Right cardiac atrium (tissue), 5 donors: ENCODE measurements at regions of chr7 and their contacts with region 1.

Region 1: DNA sequence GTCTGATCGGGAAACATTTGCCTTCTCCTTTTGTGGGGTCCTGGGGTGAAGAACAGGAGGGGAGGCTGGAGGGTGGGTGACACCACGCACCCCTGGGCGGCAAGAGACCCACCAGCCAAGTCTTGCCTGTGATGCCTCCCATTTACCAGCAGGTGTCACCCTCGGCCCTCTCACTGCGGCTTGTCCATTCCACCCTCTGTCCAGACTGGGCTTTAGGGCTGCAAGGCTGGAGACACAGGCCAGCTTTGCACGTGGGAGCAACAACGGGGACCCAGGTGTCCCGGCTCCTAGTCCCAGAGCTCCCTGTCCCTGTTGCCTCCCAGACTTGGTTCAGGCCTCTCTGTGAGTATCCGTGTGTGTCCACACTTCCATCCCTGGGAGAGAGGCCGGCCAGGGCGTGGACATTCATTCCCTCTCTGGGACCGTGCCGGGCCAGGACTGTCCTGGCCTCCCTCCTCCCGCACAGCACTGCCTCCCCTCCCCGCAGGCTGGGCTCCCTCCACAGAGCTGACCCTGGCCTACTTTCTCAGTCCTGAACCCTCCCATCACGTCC is 36.2 kb upstream of the GTF2IRD1 start:
- DNase-seq: peak; percentile 65 to 79 (median 78)
- ATAC-seq: peak; percentile 86 to 94
- H3K4me3 ChIP-seq: no peak overlapping the region
- H3K27ac ChIP-seq: no peak overlapping the region
- H3K4me1 ChIP-seq: no peaks in the 10 kb centered on the region
- H3K27me3 ChIP-seq: no peaks in the 10 kb centered on the region

Region 2: DNA sequence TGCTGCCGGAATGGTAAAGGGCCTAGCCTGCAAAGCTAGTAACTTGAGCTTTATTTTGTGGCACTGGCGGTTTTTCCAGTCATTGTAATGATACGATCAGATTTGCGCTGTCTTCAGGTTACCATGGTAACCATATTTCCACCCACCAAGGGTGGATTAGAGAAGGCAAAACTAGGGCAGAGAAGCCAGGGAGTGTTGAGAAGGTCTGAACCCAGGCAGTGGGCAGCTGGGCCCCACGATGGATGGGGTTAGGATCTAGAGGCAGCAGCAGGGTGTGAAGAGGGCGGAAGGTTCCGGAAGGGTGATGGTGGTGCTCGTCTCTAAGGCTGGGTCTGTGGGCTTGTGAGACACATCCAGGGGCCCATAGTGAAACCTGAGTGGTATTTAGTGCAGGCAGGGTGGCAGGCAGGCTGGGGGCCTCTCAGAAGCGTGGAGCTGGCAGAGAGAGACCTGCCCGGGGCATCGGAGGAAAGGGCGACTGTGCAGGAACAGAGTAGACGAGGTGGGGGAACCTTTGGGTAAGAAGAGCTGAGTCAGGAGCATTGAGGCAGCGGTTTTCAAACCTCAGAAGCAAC is 152.1 kb after region 1 on chr7:
- intact Hi-C with region 1: loop called in 2 of 4 experiments (anchors 1 to 5 kb)
- DNase-seq: no peak
- ATAC-seq: no peak
- H3K4me3 ChIP-seq: no peak overlapping the region
- H3K27ac ChIP-seq: no peak overlapping the region
- H3K4me1 ChIP-seq: no peaks in the 10 kb centered on the region
- H3K27me3 ChIP-seq: no peaks in the 10 kb centered on the region

Region 3: DNA sequence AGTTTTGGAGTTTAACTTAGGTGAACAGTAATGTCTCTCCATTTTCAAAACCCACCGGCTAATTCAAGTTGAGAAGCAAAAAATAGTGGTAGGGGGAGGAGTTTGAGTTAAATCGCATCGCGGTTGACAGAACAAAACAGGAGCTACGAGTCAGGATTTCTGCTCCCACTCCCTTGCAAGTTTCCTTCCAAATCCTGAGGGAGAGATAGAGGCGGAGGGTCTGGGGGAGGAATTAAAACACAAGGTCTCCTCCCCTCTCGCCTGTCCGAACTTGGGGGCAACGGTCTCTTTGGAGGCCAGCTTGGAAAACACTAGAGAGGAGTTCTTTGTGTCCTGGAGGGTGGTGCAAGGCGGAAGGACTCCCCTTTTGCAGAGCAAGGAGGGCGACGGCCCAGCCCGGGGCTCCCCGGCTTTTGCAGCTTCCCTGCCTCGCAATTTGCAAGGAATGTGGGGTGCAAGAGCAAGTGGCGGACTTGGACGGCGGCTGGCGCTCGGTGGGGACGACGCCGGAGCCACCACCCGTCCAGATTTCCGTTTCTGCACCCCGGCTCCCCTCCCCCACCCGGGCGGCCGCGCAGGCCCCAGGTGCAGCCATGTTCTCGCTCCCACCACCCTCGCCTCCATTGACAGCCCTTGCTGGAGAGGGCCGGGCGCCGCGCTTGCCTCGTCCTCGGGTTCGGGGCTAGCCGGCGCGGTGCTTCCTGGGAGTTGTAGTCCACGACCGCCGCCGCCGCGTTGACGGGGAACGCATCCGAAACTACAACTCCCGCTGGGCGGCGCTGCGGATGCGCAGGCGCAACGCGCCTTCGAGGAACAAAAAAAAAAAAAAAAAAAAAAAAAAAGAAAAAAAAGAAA is 239.6 kb after region 1 on chr7:
- intact Hi-C with region 1: loop called in 1 of 4 experiments (anchors 10 kb)
- DNase-seq: peak; percentile 99 to 100 (median 100)
- ATAC-seq: peak; percentile 95 to 96
- H3K4me3 ChIP-seq: peak overlapping the region; percentile 97
- H3K27ac ChIP-seq: peak overlapping the region; percentile 97
- H3K4me1 ChIP-seq: peaks cover 20% of the 10 kb centered on the region
- H3K27me3 ChIP-seq: no peaks in the 10 kb centered on the region

Region 4: DNA sequence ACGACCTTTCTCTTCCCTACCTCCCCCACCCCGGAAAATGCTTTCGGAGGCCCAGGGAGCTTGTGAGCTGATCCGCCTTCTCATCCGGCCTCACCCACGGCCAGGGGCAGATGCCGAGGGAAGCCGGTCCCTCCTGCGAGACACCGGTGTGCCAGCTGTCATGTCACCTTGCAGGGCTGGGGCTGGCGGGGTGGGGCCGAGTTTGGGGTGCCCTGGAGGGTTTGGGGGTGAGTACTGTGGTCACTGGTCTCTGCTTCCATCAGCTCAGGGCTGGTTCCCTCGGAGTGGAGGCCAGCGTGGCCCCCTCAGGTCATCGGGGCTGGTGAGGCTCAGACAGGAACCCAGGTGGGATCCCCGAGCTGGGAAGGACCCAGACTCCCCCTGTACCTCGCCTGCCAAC is 607.4 kb after region 1 on chr7:
- intact Hi-C with region 1: no loop called
- DNase-seq: no peak
- ATAC-seq: peak in 1 of 2 donors; percentile 11
- H3K4me3 ChIP-seq: no peak overlapping the region
- H3K27ac ChIP-seq: no peak overlapping the region
- H3K4me1 ChIP-seq: no peaks in the 10 kb centered on the region
- H3K27me3 ChIP-seq: no peaks in the 10 kb centered on the region

Region 5: DNA sequence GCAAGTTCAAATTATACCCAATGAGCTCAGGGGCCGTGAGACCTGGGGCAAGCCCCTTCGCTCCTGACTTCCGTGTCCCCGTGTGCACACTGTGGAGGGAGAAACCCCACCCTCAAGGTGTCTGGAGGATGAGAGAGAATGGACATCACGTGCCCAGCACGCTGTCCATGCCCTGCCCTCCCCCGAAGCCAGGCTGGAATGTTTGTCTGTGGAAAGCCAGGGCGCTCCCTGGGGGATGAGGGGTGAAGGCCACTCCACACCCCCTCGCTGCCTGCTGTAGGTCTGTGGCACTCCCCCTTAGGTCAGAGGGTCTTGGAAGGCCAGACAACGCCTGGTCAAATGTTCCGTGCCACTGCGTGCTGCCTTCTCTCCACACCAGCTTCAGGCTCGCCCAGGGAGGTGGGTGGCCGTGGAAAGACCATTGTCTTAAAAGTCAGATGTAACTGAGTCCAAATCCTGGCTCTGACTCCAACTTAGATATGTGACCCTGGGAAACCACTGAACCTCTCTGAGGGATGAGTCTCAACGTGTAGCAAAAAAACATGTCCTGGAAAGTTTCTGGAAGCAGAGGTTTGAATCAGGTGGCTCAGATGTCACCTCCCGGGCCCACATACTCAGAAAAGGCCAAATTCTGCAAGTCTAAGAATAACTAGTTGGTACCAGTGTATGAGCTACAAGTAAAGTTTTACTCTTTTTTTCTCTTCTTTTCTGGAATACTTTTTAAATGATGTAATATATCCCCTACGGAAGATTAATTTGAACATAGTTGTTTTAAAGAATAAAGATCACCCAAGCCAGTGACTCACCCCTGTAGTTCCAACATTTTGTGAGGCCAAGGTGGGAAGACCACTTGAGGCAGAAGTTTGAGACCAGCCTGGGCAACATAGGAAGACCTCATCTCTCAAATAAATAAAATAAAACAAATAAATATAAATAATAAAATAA is 631.2 kb after region 1 on chr7:
- intact Hi-C with region 1: loop called in 1 of 4 experiments (anchors 10 kb)
- DNase-seq: no peak
- ATAC-seq: no peak
- H3K4me3 ChIP-seq: no peak overlapping the region
- H3K27ac ChIP-seq: no peak overlapping the region
- H3K4me1 ChIP-seq: no peaks in the 10 kb centered on the region
- H3K27me3 ChIP-seq: no peaks in the 10 kb centered on the region